PC-9 (cell line): ENCODE measurements at regions of chr17 and their contacts with region 1.

Region 1: GRCh38 chr17:82022981-82023374 is at the start of gene LRRC45:
- DNase-seq: peak; percentile 92 to 100
- H3K4me3 ChIP-seq: peak within 1 kb of the TSS; percentile 84
- H3K27ac ChIP-seq: no peak within 1 kb of the TSS
- H3K4me1 ChIP-seq: peaks cover 6% of the 10 kb centered on the region; the same call in 1 of the 2 replicates
- H3K27me3 ChIP-seq: no peaks in the 10 kb centered on the region
- CTCF ChIP-seq: no peak
- total RNA-seq, gene LRRC45: 41.5 and 42.6 TPM in 2 replicates

Region 2: DNA sequence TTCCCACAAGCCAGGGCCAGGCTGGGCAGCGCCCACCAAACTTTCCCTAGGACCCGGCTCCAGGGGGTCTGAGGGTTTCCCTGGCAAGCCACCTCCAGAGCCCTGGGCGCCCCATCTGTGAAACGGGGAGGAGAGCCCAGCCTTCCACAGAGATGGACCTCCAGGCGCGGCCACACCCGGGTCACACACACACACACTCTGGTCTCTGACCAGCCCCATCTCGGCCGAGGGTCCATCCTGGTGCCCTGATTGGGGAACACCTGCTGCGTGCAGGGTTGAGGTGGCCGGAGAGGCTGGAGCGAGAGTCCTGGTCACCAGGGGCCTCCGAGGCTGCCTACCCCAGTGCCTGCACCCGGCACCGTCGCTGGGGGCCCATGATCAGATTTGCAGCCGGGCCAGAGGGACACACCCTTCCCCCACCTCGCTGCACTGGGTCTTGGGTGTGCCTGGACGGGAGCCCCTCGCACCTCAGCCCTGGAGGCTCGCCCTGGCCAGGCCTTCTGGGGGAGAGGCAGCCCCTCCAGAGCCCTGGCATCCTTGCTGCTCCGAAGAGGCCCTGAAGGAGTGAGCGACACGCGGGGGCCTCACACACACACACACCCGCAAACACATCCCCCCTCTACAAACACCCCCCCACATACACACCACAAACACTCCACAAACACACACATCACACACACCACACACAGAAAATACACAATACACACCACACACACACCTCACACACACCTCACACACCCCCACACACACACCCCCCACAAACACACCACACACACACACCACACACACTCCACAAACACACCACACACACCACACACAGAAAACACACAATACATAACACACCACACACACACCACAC is 281.2 kb before region 1 on chr17:
- CTCF ChIA-PET with region 1: no interaction called
- POLR2A ChIA-PET with region 1: no interaction called
- intact Hi-C with region 1: no loop called
- DNase-seq: no peak
- H3K4me3 ChIP-seq: no peak overlapping the region
- H3K27ac ChIP-seq: no peak overlapping the region
- H3K4me1 ChIP-seq: no peaks in the 10 kb centered on the region
- H3K27me3 ChIP-seq: no peaks in the 10 kb centered on the region
- CTCF ChIP-seq: no peak

Region 3: GRCh38 chr17:81871387-81872230 is 151.4 kb before region 1 on chr17:
- CTCF ChIA-PET with region 1: no interaction called
- POLR2A ChIA-PET with region 1: interaction called, 11 read pairs
- intact Hi-C with region 1: loop called (anchors 2 kb)
- DNase-seq: peak; percentile 47 to 91
- H3K4me3 ChIP-seq: peak overlapping the region; percentile 88
- H3K27ac ChIP-seq: peak overlapping the region; percentile 87
- H3K4me1 ChIP-seq: 0 out of 2 replicates have a peak, but pooled peaks cover 14% of the 10 kb centered on the region
- H3K27me3 ChIP-seq: no peaks in the 10 kb centered on the region
- CTCF ChIP-seq: no peak; the same call in 1 of the 2 replicates

Region 4: DNA sequence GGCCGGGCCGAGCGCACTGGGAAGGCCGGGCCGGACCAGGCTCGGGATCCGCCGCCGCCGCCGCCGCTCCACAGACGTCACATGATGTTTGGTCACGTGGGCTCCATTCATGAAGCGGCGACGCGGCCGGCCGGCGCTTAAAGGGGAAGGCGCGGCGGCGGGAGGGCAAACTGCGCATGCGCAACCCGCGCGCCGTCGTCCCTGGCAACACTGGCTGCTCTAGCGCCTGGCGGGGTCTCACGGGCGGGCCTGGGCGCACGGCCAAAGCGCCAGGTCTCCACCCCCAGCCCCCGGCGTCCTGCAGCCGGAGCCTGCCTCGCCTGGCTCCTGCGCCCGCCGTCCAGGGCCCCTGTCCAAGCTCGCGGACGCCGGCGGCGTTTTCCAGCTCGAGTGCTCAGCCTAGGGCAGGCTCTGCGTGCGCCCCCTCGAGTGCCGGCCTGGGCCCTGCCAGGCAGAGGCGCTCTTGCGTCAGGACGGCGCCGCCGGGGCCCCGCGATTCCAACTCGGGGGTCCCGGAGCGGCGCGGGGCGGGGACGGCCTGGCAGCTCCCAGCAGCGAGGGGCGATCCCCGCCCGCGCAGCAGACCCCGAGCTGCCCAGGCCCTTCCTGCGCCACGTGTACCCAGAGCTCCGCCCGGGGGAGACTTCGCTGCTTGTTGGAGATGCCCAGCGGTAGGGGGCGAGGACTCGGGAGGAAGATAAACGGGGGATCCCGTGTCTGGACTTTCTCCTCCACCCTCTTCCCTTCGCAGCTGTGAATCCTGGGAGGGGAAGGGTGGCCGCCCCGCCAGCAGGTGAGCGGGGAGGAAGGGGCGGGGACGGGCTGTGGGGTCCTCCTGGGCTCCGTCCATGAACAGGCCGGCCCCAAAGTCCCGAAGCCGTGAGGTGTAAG is 95.1 kb before region 1 on chr17 and contains the start of gene MAFG:
- CTCF ChIA-PET with region 1: interaction called, 7 read pairs
- POLR2A ChIA-PET with region 1: interaction called, 14 read pairs
- intact Hi-C with region 1: no loop called
- DNase-seq: peak; percentile 70 to 97
- H3K4me3 ChIP-seq: peak within 1 kb of the TSS; percentile 73
- H3K27ac ChIP-seq: peak within 1 kb of the TSS; percentile 87
- H3K4me1 ChIP-seq: peaks cover 27% of the 10 kb centered on the region
- H3K27me3 ChIP-seq: no peaks in the 10 kb centered on the region
- CTCF ChIP-seq: no peak; the same call in 1 of the 2 replicates
- total RNA-seq, gene MAFG: 79.5 and 85.9 TPM in 2 replicates

Region 5: DNA sequence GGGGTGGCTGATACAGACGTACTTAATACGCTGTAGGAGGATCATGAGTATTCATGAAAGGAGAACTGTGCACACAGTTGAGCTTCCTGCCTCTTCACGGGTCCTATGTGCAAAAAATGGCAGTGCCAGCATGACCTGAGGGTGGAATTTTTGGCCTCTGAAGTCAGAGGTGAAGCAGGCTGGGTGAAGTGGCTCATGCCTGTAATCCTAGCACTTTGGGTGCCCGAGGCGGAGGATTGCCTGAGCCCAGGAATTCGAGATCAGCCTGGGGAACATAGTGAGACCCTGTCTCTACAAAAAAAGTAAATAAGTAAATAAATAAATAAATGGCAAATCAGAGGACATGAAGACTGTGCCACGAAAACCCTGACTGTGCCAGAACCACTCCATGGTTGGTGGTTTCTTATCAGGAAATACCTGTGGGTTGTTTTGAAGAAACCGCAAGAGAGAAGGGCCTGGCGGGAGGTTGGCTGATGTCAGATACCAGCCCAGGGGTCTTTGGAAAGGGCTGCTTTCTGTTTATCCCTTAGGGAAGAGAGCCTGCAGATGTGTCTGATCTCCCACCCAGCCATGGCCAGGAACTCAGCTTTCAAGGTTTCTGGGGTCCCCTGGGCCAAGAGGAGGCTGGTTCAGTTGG is 42.2 kb before region 1 on chr17:
- CTCF ChIA-PET with region 1: no interaction called
- POLR2A ChIA-PET with region 1: no interaction called
- intact Hi-C with region 1: loop called (anchors 1 kb)
- DNase-seq: peak; percentile 87 to 92
- H3K4me3 ChIP-seq: no peak overlapping the region
- H3K27ac ChIP-seq: peak overlapping the region; percentile 86
- H3K4me1 ChIP-seq: peaks cover 33% of the 10 kb centered on the region
- H3K27me3 ChIP-seq: no peaks in the 10 kb centered on the region
- CTCF ChIP-seq: no peak

Region 6: GRCh38 chr17:82008941-82009405 is 14.0 kb before region 1 on chr17:
- CTCF ChIA-PET with region 1: no interaction called
- POLR2A ChIA-PET with region 1: interaction called, 13 read pairs
- intact Hi-C with region 1: no loop called
- DNase-seq: no peak
- H3K4me3 ChIP-seq: no peak overlapping the region
- H3K27ac ChIP-seq: no peak overlapping the region
- H3K4me1 ChIP-seq: peaks cover 5% of the 10 kb centered on the region
- H3K27me3 ChIP-seq: no peaks in the 10 kb centered on the region
- CTCF ChIP-seq: no peak

Region 7: DNA sequence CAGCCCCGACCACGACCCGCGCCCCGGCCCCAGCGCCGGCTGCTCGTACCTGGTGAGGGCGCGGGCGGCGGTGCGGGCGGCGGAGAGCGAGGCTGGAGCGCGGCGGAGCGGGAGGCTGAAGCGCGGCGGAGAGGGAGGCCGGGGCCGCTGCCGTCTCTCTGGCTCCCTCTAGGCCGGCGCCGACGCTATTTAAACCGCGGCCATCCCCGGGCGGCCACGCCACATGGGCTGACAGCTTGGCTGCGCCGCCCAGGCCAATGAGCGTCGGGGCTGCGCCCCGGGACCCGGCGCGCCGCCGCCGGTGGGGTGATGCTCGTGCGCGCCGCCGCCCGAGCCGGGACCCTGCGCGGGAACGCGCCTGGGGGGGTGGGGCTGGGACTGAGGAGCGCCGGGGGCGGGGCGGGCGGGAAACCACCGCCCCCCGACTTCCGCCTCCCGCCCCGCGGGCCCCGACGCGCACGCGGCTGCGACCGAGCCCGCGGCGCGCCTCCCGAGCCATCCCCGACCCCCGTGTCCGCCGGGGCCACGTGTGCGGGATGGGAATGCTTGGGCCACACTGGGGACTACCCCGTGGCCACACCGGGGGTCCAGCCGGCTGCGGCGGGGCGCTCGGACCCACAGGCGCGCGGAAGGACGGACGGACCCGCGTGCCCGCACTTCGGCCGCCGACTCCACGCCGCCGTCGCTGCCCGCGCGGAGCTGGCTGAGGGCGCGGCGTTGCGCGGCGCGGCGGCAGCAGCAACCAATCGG is 75.3 kb after region 1 on chr17 and contains the start of gene FASN:
- CTCF ChIA-PET with region 1: no interaction called
- POLR2A ChIA-PET with region 1: no interaction called
- intact Hi-C with region 1: loop called (anchors 1 kb)
- DNase-seq: peak; percentile 70 to 97
- H3K4me3 ChIP-seq: peak within 1 kb of the TSS; percentile 67
- H3K27ac ChIP-seq: peak within 1 kb of the TSS; percentile 88
- H3K4me1 ChIP-seq: peaks cover 40% of the 10 kb centered on the region
- H3K27me3 ChIP-seq: no peaks in the 10 kb centered on the region
- CTCF ChIP-seq: no peak; the same call in 1 of the 2 replicates
- total RNA-seq, gene FASN: 455 and 658 TPM in 2 replicates